T-cell (primary cell): ENCODE measurements at regions of chr7 and their contacts with region 1.

Region 1: GRCh38 chr7:12257582-12257981 is 46.5 kb downstream of the TMEM106B start:
- DNase-seq: peak in 14 of 35 experiments; percentile 3 to 79 (median 16)
- ATAC-seq: peak; percentile 96 to 97 (median 97)
- H3K4me3 ChIP-seq: peak overlapping the region in 1 of 2 donors; percentile 37
- H3K4me3 Mint-ChIP-seq: no peak overlapping the region
- H3K27ac ChIP-seq: peak overlapping the region; percentile 83
- H3K27ac Mint-ChIP-seq: no peak overlapping the region
- H3K4me1 ChIP-seq: peaks cover 0 to 8% of the 10 kb centered on the region in 2 experiments
- H3K4me1 Mint-ChIP-seq: peaks cover 0 to 11% (median 7%) of the 10 kb centered on the region in 3 donors
- H3K27me3 ChIP-seq: no peaks in the 10 kb centered on the region
- H3K27me3 Mint-ChIP-seq: no peaks in the 10 kb centered on the region

Region 2: DNA sequence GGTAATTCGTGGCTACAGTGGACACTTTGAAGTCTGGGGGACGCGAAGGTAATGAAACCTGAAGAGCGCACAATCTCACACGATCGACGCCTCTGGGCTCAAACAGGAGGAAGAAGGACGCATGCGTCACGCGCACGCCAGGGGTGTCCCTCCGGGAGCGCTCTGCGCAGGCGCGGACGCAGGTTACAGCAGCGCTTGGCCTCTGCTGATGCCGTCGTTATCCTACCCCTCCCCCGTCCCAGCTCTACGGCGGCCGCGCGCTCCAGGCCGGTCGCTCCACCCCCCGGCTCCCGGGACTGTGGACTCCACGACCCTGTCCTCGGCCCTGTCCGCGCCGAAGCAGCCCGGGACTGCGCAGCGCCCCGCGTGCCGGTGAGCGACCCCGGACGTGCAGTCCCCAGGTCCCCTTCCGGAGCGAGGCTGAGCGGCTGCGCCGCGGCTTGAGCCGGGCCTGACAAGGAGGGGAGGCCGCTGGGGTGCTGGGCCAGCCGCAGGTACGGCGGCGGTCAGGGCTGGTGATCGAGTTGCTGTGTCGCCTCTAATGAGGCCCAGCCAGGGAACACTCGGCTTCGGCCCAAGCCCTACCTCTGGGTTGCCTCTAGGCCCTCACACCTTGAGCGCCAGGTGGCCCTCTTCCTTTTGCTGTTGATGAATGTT is 46.4 kb before region 1 on chr7 and contains the start of gene TMEM106B:
- CTCF ChIA-PET with region 1: interaction called in 1 of 2 experiments, 10 read pairs
- POLR2A ChIA-PET with region 1: interaction called, 4 to 5 read pairs
- DNase-seq: peak; percentile 89 to 99 (median 96)
- ATAC-seq: peak; percentile 89 to 93 (median 90)
- H3K4me3 ChIP-seq: peak within 1 kb of the TSS; percentile 66 to 91
- H3K4me3 Mint-ChIP-seq: peak within 1 kb of the TSS; percentile 89 to 95 (median 94)
- H3K27ac ChIP-seq: peak within 1 kb of the TSS; percentile 99
- H3K27ac Mint-ChIP-seq: peak within 1 kb of the TSS; percentile 97
- H3K4me1 ChIP-seq: peaks cover 14 to 18% of the 10 kb centered on the region in 2 experiments
- H3K4me1 Mint-ChIP-seq: peaks cover 44 to 48% (median 44%) of the 10 kb centered on the region in 3 donors
- H3K27me3 ChIP-seq: no peaks in the 10 kb centered on the region
- H3K27me3 Mint-ChIP-seq: peaks cover 0 to 7% of the 10 kb centered on the region in 2 donors
- total RNA-seq, gene TMEM106B: 30.8 to 45.9 (median 38.7) TPM

Region 3: GRCh38 chr7:12222889-12223579 is 34.5 kb before region 1 on chr7:
- CTCF ChIA-PET with region 1: no interaction called
- POLR2A ChIA-PET with region 1: interaction called in 1 of 2 experiments, 12 read pairs
- DNase-seq: peak in 1 of 35 experiments; percentile 51
- ATAC-seq: peak; percentile 69 to 94 (median 92)
- H3K4me3 ChIP-seq: no peak overlapping the region
- H3K4me3 Mint-ChIP-seq: peak overlapping the region; percentile 40 to 60 (median 46)
- H3K27ac ChIP-seq: peak overlapping the region; percentile 58
- H3K27ac Mint-ChIP-seq: peak overlapping the region; percentile 91 to 93
- H3K4me1 ChIP-seq: peaks cover 13 to 34% of the 10 kb centered on the region in 2 experiments
- H3K4me1 Mint-ChIP-seq: peaks cover 58 to 64% (median 62%) of the 10 kb centered on the region in 3 donors
- H3K27me3 ChIP-seq: no peaks in the 10 kb centered on the region
- H3K27me3 Mint-ChIP-seq: no peaks in the 10 kb centered on the region

Region 4: GRCh38 chr7:12315049-12315448 is 57.5 kb after region 1 on chr7:
- CTCF ChIA-PET with region 1: no interaction called
- POLR2A ChIA-PET with region 1: no interaction called
- DNase-seq: no peak
- ATAC-seq: no peak
- H3K4me3 ChIP-seq: no peak overlapping the region
- H3K4me3 Mint-ChIP-seq: no peak overlapping the region
- H3K27ac ChIP-seq: no peak overlapping the region
- H3K27ac Mint-ChIP-seq: no peak overlapping the region
- H3K4me1 ChIP-seq: no peaks in the 10 kb centered on the region
- H3K4me1 Mint-ChIP-seq: no peaks in the 10 kb centered on the region
- H3K27me3 ChIP-seq: no peaks in the 10 kb centered on the region
- H3K27me3 Mint-ChIP-seq: peaks cover 0 to 5% of the 10 kb centered on the region in 2 donors